ENCODE measurements at regions of chr10 and their contacts with region 1.

Region 1: GRCh38 chr10:24642622-24643417 is 80.9 kb downstream of the ARHGAP21 start:
- DNase-seq: peak in 4 of 14 experiments; percentile 27 to 74 (median 70)
- ATAC-seq: peak; percentile 92
- H3K4me3 ChIP-seq: no peak overlapping the region
- H3K4me3 Mint-ChIP-seq: no peak overlapping the region
- H3K27ac ChIP-seq: no peak overlapping the region
- H3K27ac Mint-ChIP-seq: no peak overlapping the region
- H3K4me1 ChIP-seq: no peaks in the 10 kb centered on the region
- H3K4me1 Mint-ChIP-seq: no peaks in the 10 kb centered on the region
- H3K27me3 ChIP-seq: no peaks in the 10 kb centered on the region
- H3K27me3 Mint-ChIP-seq: no peaks in the 10 kb centered on the region
- CTCF ChIP-seq: peak; percentile 93

Region 2: DNA sequence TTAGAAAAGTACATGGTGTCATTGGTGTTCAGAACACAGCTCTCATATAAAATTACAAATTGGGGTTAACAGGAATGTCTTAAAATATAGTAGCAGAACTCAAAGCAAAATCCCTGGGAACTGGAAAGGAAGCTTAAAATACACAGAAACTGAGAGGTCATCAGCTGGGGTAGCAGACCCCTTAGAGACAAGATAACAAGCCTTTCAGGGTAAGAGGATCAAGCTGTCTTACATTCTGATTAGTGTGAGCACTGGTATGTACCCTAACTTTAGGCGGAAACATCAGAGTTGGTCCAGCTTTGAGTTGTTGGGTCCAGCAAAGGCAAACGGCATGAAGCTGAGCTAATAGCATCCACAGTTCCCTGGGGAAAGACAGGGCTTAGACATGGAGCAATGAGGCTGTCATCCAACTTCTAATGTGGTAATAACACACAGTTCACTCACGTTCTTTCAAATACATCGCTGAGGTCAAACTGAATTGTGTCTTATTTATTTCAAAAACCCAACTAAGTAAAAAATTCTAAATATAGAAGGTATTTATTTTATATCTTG is 48.2 kb after region 1 on chr10:
- CTCF ChIA-PET with region 1: no interaction called
- POLR2A ChIA-PET with region 1: no interaction called
- intact Hi-C with region 1: no loop called
- DNase-seq: no peak
- ATAC-seq: no peak
- H3K4me3 ChIP-seq: no peak overlapping the region
- H3K4me3 Mint-ChIP-seq: no peak overlapping the region
- H3K27ac ChIP-seq: no peak overlapping the region
- H3K27ac Mint-ChIP-seq: no peak overlapping the region
- H3K4me1 ChIP-seq: no peaks in the 10 kb centered on the region
- H3K4me1 Mint-ChIP-seq: peaks cover 12% of the 10 kb centered on the region
- H3K27me3 ChIP-seq: no peaks in the 10 kb centered on the region
- H3K27me3 Mint-ChIP-seq: no peaks in the 10 kb centered on the region
- CTCF ChIP-seq: no peak

Region 3: GRCh38 chr10:24952707-24953645 is 310.2 kb after region 1 on chr10:
- CTCF ChIA-PET with region 1: no interaction called
- POLR2A ChIA-PET with region 1: no interaction called
- intact Hi-C with region 1: loop called (anchors 1 kb)
- DNase-seq: peak; percentile 7 to 80 (median 54)
- ATAC-seq: peak; percentile 77
- H3K4me3 ChIP-seq: peak overlapping the region; percentile 72
- H3K4me3 Mint-ChIP-seq: peak overlapping the region; percentile 87
- H3K27ac ChIP-seq: no peak overlapping the region
- H3K27ac Mint-ChIP-seq: peak overlapping the region; percentile 62
- H3K4me1 ChIP-seq: peaks cover 17% of the 10 kb centered on the region
- H3K4me1 Mint-ChIP-seq: peaks cover 18% of the 10 kb centered on the region
- H3K27me3 ChIP-seq: no peaks in the 10 kb centered on the region
- H3K27me3 Mint-ChIP-seq: no peaks in the 10 kb centered on the region
- CTCF ChIP-seq: peak; percentile 24

Region 4: DNA sequence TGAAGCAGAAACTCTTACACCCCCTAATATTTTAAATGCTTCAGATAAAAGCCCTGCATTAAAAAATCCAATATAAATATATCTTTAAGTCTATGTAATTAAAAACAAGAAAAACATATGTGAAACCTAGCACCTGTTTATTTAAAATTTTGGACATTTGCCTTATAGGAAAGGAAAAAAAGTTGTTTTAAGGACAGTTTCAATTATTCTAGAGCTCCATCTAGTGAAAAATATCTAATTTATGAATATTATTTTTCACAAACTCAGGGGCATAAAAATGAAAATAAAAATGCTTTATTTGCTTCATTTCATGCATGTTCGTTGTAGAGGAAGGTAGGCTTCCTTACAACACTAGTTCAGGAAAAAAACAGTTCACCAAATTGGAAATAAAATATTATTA is 347.0 kb after region 1 on chr10:
- CTCF ChIA-PET with region 1: no interaction called
- POLR2A ChIA-PET with region 1: no interaction called
- intact Hi-C with region 1: loop called (anchors 1 to 2 kb)
- DNase-seq: no peak
- ATAC-seq: no peak
- H3K4me3 ChIP-seq: no peak overlapping the region
- H3K4me3 Mint-ChIP-seq: no peak overlapping the region
- H3K27ac ChIP-seq: no peak overlapping the region
- H3K27ac Mint-ChIP-seq: no peak overlapping the region
- H3K4me1 ChIP-seq: no peaks in the 10 kb centered on the region
- H3K4me1 Mint-ChIP-seq: no peaks in the 10 kb centered on the region
- H3K27me3 ChIP-seq: no peaks in the 10 kb centered on the region
- H3K27me3 Mint-ChIP-seq: peaks cover 3% of the 10 kb centered on the region
- CTCF ChIP-seq: peak; percentile 55

Region 5: GRCh38 chr10:25080880-25081581 is 438.2 kb after region 1 on chr10:
- CTCF ChIA-PET with region 1: interaction called, 3 read pairs
- POLR2A ChIA-PET with region 1: no interaction called
- intact Hi-C with region 1: loop called (anchors 1 kb)
- DNase-seq: peak; percentile 27 to 75 (median 46)
- ATAC-seq: peak; percentile 54
- H3K4me3 ChIP-seq: no peak overlapping the region
- H3K4me3 Mint-ChIP-seq: no peak overlapping the region
- H3K27ac ChIP-seq: no peak overlapping the region
- H3K27ac Mint-ChIP-seq: no peak overlapping the region
- H3K4me1 ChIP-seq: no peaks in the 10 kb centered on the region
- H3K4me1 Mint-ChIP-seq: no peaks in the 10 kb centered on the region
- H3K27me3 ChIP-seq: peaks cover under 1 to 5% of the 10 kb centered on the region in 2 experiments
- H3K27me3 Mint-ChIP-seq: peaks cover 14% of the 10 kb centered on the region
- CTCF ChIP-seq: peak; percentile 85

Region 6: DNA sequence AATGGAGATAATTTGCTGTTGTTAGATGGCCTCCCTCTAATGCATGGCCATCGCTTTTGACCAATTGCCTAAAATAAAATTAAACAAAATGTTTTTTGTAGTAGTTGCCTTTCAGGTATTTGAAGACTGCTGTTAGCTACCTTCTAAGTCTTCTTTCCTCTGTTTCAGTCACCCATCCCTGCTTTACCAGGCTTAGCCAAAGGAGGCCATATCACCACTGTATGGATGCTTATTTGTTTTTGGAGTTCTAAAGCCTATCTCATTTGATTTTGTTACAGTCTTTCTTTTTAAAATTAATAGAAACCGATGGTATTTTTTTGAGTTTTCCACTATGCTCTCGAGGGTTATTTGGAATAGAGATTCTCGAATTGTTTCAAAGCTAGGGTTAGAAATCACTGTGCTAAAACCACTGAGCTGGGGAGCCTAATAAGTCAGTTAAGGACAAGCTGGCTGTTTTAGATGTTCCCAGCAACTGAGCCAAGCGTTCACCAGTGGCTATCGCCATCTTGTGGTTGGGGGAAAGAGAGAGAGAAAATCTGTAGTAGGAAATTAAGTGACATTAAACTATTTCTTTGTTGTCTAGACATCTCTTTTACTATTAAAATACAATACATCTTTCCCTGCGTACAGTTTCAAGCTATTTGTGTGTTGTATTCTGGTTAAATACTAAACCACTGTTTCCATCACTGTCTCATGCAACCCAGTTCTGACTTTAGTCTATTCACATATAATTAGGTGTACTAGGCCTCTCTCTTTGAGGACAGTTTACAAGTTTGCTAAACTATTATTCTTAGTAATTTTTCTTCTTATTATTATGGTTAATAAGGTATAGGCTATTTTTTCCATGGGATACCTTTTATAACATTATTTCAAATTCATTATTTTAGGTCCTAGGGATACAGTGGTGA is 584.2 kb after region 1 on chr10:
- CTCF ChIA-PET with region 1: no interaction called
- POLR2A ChIA-PET with region 1: no interaction called
- intact Hi-C with region 1: loop called (anchors 2 to 5 kb)
- DNase-seq: peak in 3 of 14 experiments; percentile 4 to 11 (median 11)
- ATAC-seq: no peak
- H3K4me3 ChIP-seq: no peak overlapping the region
- H3K4me3 Mint-ChIP-seq: no peak overlapping the region
- H3K27ac ChIP-seq: no peak overlapping the region
- H3K27ac Mint-ChIP-seq: no peak overlapping the region
- H3K4me1 ChIP-seq: no peaks in the 10 kb centered on the region
- H3K4me1 Mint-ChIP-seq: no peaks in the 10 kb centered on the region
- H3K27me3 ChIP-seq: no peaks in the 10 kb centered on the region
- H3K27me3 Mint-ChIP-seq: no peaks in the 10 kb centered on the region
- CTCF ChIP-seq: no peak

Region 7: GRCh38 chr10:25666276-25666675 is 1023.5 kb after region 1 on chr10:
- CTCF ChIA-PET with region 1: no interaction called
- POLR2A ChIA-PET with region 1: no interaction called
- intact Hi-C with region 1: no loop called
- DNase-seq: no peak
- ATAC-seq: no peak
- H3K4me3 ChIP-seq: no peak overlapping the region
- H3K4me3 Mint-ChIP-seq: no peak overlapping the region
- H3K27ac ChIP-seq: no peak overlapping the region
- H3K27ac Mint-ChIP-seq: no peak overlapping the region
- H3K4me1 ChIP-seq: no peaks in the 10 kb centered on the region
- H3K4me1 Mint-ChIP-seq: no peaks in the 10 kb centered on the region
- H3K27me3 ChIP-seq: no peaks in the 10 kb centered on the region
- H3K27me3 Mint-ChIP-seq: peaks cover 7% of the 10 kb centered on the region
- CTCF ChIP-seq: no peak

Measured in CD4-positive, alpha-beta T cell (primary cell).